ENCODE measurements at regions of chr1 and their contacts with region 1.

Region 1: GRCh38 chr1:61491497-61491896 is 233.4 kb downstream of the TM2D1 start:
- DNase-seq: no peak
- H3K4me3 ChIP-seq: no peak overlapping the region
- H3K27ac ChIP-seq: no peak overlapping the region
- H3K4me1 ChIP-seq: peaks cover 29% of the 10 kb centered on the region
- H3K27me3 ChIP-seq: no peaks in the 10 kb centered on the region
- CTCF ChIP-seq: no peak

Region 2: DNA sequence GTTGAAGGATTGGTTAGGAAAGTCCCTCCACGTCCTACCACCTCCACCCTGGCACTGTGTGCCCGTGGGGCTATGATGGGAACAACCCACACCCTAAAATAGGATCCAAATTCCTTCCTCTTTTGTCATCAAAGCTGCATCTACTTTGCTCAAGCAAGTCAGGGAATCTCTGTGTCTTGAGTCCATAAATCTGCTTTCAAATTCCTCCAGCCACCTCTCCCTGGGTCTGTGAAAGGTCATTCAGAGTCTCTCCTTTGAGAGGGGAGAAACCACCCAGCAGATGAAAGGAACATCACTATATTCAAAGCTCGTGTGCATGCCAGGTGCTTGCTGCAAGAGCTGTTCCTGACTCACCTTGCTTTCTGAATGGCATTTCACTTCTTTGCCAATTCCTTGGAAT is 10.2 kb before region 1 on chr1:
- CTCF ChIA-PET with region 1: no interaction called
- POLR2A ChIA-PET with region 1: no interaction called
- intact Hi-C with region 1: loop called (anchors 1 kb)
- DNase-seq: peak; percentile 65 to 99
- H3K4me3 ChIP-seq: no peak overlapping the region
- H3K27ac ChIP-seq: peak overlapping the region; percentile 96
- H3K4me1 ChIP-seq: peaks cover 42% of the 10 kb centered on the region
- H3K27me3 ChIP-seq: no peaks in the 10 kb centered on the region
- CTCF ChIP-seq: no peak

Region 3: DNA sequence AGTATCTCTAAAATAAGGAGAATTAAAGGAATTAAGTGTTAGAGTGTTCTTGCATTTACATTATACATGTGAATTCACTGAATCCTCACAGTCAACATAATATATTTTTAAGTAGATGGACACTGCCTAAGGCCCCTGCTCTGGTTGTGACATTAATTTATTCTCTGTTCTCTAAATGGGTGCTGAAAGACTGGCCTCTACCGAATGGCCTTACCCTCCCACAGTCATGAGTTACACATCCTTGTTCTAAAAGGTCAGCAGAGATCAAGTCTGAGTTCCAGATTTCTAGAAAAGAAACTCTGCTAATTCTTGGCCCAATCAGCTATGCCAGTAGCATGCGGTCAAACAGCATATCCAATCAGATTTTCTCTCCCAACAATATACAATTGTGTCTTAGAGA is 40.2 kb after region 1 on chr1:
- CTCF ChIA-PET with region 1: no interaction called
- POLR2A ChIA-PET with region 1: no interaction called
- intact Hi-C with region 1: no loop called
- DNase-seq: no peak
- H3K4me3 ChIP-seq: no peak overlapping the region
- H3K27ac ChIP-seq: no peak overlapping the region
- H3K4me1 ChIP-seq: no peaks in the 10 kb centered on the region
- H3K27me3 ChIP-seq: no peaks in the 10 kb centered on the region
- CTCF ChIP-seq: no peak

Region 4: GRCh38 chr1:61641578-61642336 is 150.3 kb after region 1 on chr1:
- CTCF ChIA-PET with region 1: no interaction called
- POLR2A ChIA-PET with region 1: no interaction called
- intact Hi-C with region 1: loop called (anchors 10 kb)
- DNase-seq: peak in 1 of 2 experiments; percentile 37
- H3K4me3 ChIP-seq: no peak overlapping the region
- H3K27ac ChIP-seq: peak overlapping the region; percentile 59
- H3K4me1 ChIP-seq: peaks cover 48% of the 10 kb centered on the region
- H3K27me3 ChIP-seq: no peaks in the 10 kb centered on the region
- CTCF ChIP-seq: no peak

Region 5: GRCh38 chr1:61708953-61709907 is 217.7 kb after region 1 on chr1:
- CTCF ChIA-PET with region 1: interaction called, 17 read pairs
- POLR2A ChIA-PET with region 1: no interaction called
- intact Hi-C with region 1: no loop called
- DNase-seq: no peak
- H3K4me3 ChIP-seq: no peak overlapping the region
- H3K27ac ChIP-seq: no peak overlapping the region
- H3K4me1 ChIP-seq: peaks cover 13% of the 10 kb centered on the region; the same call in 1 of the 2 replicates
- H3K27me3 ChIP-seq: no peaks in the 10 kb centered on the region
- CTCF ChIP-seq: no peak

Measured in PC-9 (cell line).